ENCODE measurements at regions of chr1 and their contacts with region 1.

Region 1: GRCh38 chr1:152189657-152190442 is 30.8 kb upstream of the RPTN start:
- DNase-seq: peak; percentile 41
- H3K4me3 Mint-ChIP-seq: peak overlapping the region; percentile 68
- H3K27ac Mint-ChIP-seq: peak overlapping the region; percentile 56
- H3K4me1 Mint-ChIP-seq: peaks cover 6% of the 10 kb centered on the region
- H3K27me3 Mint-ChIP-seq: peaks cover 27% of the 10 kb centered on the region

Region 2: DNA sequence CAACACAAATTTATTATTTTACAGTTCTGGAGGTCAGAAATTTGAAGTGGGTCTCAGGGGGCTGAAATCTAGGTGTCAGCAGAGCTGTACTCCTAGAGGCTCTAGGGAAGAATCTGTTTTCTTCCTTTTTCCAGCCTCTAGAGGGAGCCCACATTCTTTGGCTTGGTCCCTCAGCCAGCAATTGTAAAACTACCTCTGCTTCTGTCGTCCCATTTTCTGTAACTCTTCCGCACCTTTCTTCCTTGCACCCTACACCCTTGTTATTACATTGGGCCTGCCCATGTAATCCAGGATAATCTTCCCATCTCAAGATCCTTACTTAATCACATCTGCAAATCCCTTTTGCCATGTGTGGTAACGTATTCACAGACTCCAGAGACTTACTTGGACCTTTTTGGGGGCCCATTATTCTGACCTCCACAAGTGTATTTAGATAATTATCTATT is 255.8 kb before region 1 on chr1:
- intact Hi-C with region 1: loop called (anchors 1 kb)
- DNase-seq: peak; percentile 32
- H3K4me3 Mint-ChIP-seq: no peak overlapping the region
- H3K27ac Mint-ChIP-seq: no peak overlapping the region
- H3K4me1 Mint-ChIP-seq: peaks cover 9% of the 10 kb centered on the region
- H3K27me3 Mint-ChIP-seq: peaks cover 12% of the 10 kb centered on the region

Region 3: DNA sequence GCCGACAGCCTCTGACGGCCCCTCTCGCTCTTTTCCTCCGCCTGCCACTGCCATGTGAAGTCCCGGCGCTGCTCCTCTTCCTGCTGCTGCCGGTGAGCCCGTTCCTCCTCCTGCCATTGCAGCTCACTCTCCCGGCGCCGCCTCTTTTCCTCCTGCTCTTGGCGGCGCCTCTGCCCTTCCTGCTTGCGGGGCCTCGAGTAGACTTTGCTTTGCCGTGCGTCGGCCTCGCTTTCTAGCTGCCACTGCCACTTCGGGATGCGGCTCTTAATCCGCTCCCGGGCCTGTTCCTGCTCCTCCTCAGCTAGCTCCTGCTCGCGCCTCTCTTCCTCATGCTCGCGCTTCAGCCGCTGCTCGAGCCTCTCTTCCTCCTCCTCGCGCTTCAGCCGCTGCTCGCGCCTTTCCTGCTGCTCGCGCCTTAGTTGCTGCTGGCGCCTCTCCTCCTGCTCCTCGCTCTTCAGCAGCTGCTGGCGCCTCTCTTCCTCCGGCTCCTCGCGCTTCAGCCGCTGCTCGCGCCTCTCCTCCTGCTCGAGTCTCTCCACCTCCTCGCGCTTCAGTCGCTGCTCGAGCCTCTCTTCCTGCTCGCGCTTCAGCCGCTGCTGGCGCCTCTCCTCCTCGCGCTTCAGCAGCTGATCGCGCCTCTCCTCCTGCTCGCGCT is 78.9 kb before region 1 on chr1:
- intact Hi-C with region 1: loop called (anchors 2 kb)
- DNase-seq: peak; percentile 5
- H3K4me3 Mint-ChIP-seq: no peak overlapping the region
- H3K27ac Mint-ChIP-seq: no peak overlapping the region
- H3K4me1 Mint-ChIP-seq: peaks cover 12% of the 10 kb centered on the region
- H3K27me3 Mint-ChIP-seq: peaks cover 24% of the 10 kb centered on the region

Region 4: DNA sequence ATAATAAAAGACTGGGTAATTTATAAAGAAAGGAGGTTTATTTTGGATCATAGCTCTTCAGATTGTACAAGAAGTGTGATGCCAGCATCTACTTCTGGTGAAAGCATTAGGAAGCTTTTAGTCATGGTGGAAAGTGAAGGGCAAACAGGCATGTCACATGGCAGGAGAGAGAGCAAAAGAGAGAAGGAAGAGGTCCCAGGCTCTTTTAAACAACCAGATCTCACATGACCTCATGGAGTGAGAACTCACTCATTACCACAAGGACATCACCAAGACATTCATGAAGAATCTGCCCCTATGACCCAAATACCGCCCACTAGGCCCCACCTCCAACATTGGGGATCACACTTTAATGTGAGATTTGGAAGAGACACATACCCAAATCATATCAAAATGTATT is 40.9 kb before region 1 on chr1:
- intact Hi-C with region 1: no loop called
- DNase-seq: no peak
- H3K4me3 Mint-ChIP-seq: no peak overlapping the region
- H3K27ac Mint-ChIP-seq: no peak overlapping the region
- H3K4me1 Mint-ChIP-seq: no peaks in the 10 kb centered on the region
- H3K27me3 Mint-ChIP-seq: peaks cover 19% of the 10 kb centered on the region

Region 5: GRCh38 chr1:152347116-152347728 is 157.4 kb after region 1 on chr1:
- intact Hi-C with region 1: loop called (anchors 1 kb)
- DNase-seq: peak; percentile 21
- H3K4me3 Mint-ChIP-seq: no peak overlapping the region
- H3K27ac Mint-ChIP-seq: no peak overlapping the region
- H3K4me1 Mint-ChIP-seq: no peaks in the 10 kb centered on the region
- H3K27me3 Mint-ChIP-seq: peaks cover 18% of the 10 kb centered on the region

Region 6: DNA sequence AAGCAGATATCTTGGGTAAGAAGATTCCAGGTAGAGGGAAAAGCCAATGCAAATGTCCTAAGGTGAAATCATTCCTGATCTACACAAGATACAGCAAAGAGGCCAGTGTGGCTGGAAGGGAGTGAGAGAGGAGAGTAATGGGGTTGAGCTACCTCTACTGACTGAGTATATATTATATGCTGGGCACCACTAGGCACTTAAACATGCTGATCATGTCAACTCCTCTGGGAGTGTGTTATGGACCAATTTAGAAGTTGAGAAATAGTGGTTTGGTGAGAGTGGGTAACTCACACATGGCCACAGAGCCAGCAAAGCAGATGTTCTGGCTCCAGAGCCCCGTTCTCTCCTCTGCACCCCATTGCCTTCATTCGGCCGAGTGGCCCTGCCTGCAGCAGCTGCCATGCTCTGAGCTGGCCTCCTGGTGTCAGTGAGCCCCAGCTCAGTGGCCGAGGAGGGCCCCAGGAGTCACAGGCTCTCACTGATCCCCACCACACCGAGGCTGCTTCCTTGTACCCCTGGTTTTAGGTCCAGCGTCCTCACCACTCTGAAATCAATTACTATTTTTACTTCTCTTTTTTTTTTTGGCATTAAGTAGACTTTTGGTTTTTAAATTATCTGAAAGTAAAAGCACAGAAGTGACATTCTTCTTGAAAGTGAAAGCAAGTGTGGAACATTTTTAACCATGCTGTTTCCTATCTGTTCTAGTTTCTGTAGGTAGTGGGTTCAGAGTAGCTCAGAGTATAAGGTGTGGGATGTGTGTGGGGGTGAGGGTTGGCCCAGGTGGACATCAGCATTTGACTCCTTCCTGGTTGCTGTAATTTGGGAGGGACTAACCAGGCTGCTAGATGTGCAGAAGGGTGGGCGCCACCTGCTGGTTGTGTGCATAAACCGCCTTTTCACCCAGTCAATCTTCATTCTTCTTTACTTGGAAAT is 270.0 kb after region 1 on chr1:
- intact Hi-C with region 1: loop called (anchors 1 kb)
- DNase-seq: peak; percentile 46
- H3K4me3 Mint-ChIP-seq: peak overlapping the region; percentile 32
- H3K27ac Mint-ChIP-seq: peak overlapping the region; percentile 66
- H3K4me1 Mint-ChIP-seq: peaks cover 32% of the 10 kb centered on the region
- H3K27me3 Mint-ChIP-seq: peaks cover 8% of the 10 kb centered on the region

Region 7: GRCh38 chr1:152869808-152870419 is 680.1 kb after region 1 on chr1:
- intact Hi-C with region 1: no loop called
- DNase-seq: peak; percentile 23
- H3K4me3 Mint-ChIP-seq: no peak overlapping the region
- H3K27ac Mint-ChIP-seq: no peak overlapping the region
- H3K4me1 Mint-ChIP-seq: no peaks in the 10 kb centered on the region
- H3K27me3 Mint-ChIP-seq: peaks cover 2% of the 10 kb centered on the region